ENCODE measurements at regions of chr18 and their contacts with region 1.

Region 1: DNA sequence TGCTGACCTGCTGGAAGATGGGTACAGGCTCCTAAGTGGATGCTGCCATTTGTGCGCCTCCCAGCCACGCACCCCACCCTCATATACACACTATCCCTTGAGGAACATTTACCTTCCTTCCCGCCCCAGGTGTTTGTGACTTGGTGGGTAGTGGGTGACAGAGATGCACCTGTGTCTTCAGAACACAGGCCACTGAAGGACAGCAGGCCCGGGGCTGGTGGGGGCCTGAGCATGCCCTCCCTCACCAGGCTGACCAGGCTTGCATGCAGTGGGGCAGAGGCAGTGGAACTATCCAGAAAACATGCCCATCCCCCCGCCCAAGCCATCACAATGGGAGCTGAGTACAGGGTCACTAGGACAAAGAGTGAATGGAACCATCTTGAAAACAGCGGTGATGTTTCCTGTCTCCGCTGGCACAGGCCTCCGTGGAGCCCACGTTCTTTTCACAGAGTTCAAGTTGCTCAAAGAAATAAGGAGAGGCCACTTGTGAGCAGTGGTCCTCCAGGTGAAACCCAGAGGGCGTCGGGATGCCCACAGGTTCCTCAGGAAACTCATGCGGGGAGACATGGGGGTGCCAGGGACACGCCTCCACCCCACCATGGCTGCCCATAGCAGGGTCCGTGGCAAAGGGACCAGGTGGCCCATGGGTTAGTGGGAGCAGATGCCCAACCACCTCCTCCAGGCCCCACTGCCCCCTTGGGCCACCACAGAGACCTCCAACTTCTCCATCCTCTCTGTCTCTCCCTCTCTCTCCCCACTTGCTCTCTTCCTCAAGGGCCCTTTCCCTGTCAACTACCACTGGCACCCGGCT is 90.9 kb downstream of the MALT1 start:
- DNase-seq: peak in 1 of 2 experiments; percentile 46
- H3K4me3 ChIP-seq: no peak overlapping the region
- H3K27ac ChIP-seq: no peak overlapping the region
- H3K4me1 ChIP-seq: peaks cover 0 to 7% (median 0%) of the 10 kb centered on the region in 4 experiments; a peak in 3 of 7 replicates
- H3K27me3 ChIP-seq: no peaks in the 10 kb centered on the region
- CTCF ChIP-seq: no peak
- EP300 ChIP-seq: no peak
- POLR2A ChIP-seq: no peak
- RAD21 ChIP-seq: no peak

Region 2: GRCh38 chr18:58520969-58521368 is 241.2 kb before region 1 on chr18:
- CTCF ChIA-PET with region 1: interaction called, 493 read pairs
- POLR2A ChIA-PET with region 1: no interaction called
- DNase-seq: no peak
- H3K4me3 ChIP-seq: no peak overlapping the region
- H3K27ac ChIP-seq: no peak overlapping the region
- H3K4me1 ChIP-seq: no peaks in the 10 kb centered on the region
- H3K27me3 ChIP-seq: no peaks in the 10 kb centered on the region
- CTCF ChIP-seq: no peak
- EP300 ChIP-seq: no peak
- POLR2A ChIP-seq: no peak
- RAD21 ChIP-seq: no peak

Region 3: DNA sequence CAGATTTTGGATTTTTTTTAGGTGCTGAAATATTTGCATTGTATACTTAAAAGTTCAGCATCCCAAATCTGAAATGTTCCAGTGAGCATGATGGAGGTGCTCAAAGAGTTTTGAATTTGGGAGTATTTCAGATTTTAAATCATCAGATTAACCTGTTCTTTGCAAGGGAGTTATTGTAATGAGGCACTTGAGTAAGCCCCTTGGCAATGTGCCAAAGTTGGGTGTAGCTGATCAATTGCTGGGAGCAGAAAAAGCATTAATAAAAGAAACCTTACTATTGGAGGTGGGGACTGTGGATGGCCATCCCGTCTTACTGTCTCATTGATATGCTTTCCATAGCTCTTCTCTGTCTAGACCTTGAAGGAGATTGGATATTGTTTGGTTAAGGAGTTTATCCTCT is 62.6 kb before region 1 on chr18:
- CTCF ChIA-PET with region 1: interaction called, 21 read pairs
- POLR2A ChIA-PET with region 1: no interaction called
- DNase-seq: no peak
- H3K4me3 ChIP-seq: no peak overlapping the region
- H3K27ac ChIP-seq: no peak overlapping the region
- H3K4me1 ChIP-seq: peaks cover 0 to 3% (median 0%) of the 10 kb centered on the region in 4 experiments; a peak in 1 of 7 replicates
- H3K27me3 ChIP-seq: no peaks in the 10 kb centered on the region
- CTCF ChIP-seq: no peak
- EP300 ChIP-seq: no peak
- POLR2A ChIP-seq: no peak
- RAD21 ChIP-seq: no peak

Region 4: DNA sequence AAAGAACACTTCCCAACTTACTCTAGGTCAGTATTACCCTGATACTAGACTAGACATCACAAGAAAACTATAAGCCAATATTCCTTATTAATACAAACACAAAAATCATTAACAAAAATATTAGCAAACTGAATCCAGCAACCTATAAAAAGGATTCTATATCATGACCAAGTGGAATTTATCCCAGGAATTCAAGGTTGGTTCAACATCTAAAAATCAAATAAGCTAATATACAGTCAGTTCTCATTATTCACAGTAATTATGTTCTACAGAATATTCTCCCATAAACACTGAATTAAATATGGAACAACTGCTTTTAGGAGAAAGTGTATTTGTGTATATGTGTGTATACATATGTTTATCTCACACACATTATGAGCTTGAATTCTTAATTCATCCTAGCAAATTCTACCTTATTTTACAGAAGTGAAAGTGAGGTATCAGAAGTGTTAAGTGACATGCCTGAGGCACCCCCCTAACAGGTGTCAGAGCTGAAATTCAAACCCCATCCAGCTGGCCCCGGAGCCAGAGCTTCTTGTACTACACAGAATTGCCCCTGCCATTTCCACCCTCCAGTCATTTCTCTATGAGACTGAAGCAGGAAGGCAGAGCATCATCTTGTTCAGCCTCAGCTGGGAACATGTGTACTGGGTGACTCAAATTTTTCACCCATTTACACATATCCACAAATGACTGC is 13.1 kb before region 1 on chr18:
- CTCF ChIA-PET with region 1: interaction called, 32 read pairs
- POLR2A ChIA-PET with region 1: no interaction called
- DNase-seq: no peak
- H3K4me3 ChIP-seq: no peak overlapping the region
- H3K27ac ChIP-seq: no peak overlapping the region
- H3K4me1 ChIP-seq: no peaks in the 10 kb centered on the region
- H3K27me3 ChIP-seq: no peaks in the 10 kb centered on the region
- CTCF ChIP-seq: no peak
- EP300 ChIP-seq: no peak
- POLR2A ChIP-seq: no peak
- RAD21 ChIP-seq: no peak

Region 5: DNA sequence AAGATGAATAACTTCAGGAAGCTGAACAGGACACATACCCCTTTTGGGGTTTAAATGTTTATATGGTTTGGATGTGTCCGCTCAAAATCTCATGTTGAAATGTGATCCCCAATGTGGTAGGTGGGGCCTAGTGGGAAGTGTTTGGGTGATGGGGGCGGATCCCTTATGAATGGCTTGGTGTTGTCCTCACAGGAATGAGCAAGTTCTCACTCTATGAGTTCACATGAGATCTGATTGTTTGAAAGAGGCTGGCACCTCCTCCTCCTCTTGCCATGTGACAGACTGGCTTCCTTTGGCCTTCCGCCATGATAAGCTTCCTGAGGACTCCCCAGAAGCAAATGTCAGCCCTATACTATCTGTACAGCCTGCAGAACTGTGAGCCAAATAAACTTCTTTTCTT is 13.9 kb after region 1 on chr18:
- CTCF ChIA-PET with region 1: interaction called, 42 read pairs
- POLR2A ChIA-PET with region 1: interaction called, 5 read pairs
- DNase-seq: no peak
- H3K4me3 ChIP-seq: no peak overlapping the region
- H3K27ac ChIP-seq: no peak overlapping the region
- H3K4me1 ChIP-seq: no peaks in the 10 kb centered on the region
- H3K27me3 ChIP-seq: no peaks in the 10 kb centered on the region
- CTCF ChIP-seq: no peak
- EP300 ChIP-seq: no peak
- POLR2A ChIP-seq: no peak
- RAD21 ChIP-seq: no peak

Region 6: GRCh38 chr18:58870621-58871020 is 108.4 kb after region 1 on chr18:
- CTCF ChIA-PET with region 1: no interaction called
- POLR2A ChIA-PET with region 1: no interaction called
- DNase-seq: no peak
- H3K4me3 ChIP-seq: no peak overlapping the region
- H3K27ac ChIP-seq: no peak overlapping the region
- H3K4me1 ChIP-seq: peaks cover 15 to 32% (median 25%) of the 10 kb centered on the region in 4 experiments
- H3K27me3 ChIP-seq: no peaks in the 10 kb centered on the region
- CTCF ChIP-seq: no peak
- EP300 ChIP-seq: no peak
- POLR2A ChIP-seq: no peak; a peak in 1 of 3 replicates
- RAD21 ChIP-seq: no peak

Region 7: GRCh38 chr18:59075923-59076322 is 313.7 kb after region 1 on chr18:
- CTCF ChIA-PET with region 1: interaction called, 591 read pairs
- POLR2A ChIA-PET with region 1: interaction called, 3 read pairs
- DNase-seq: no peak
- H3K4me3 ChIP-seq: no peak overlapping the region
- H3K27ac ChIP-seq: no peak overlapping the region
- H3K4me1 ChIP-seq: no peaks in the 10 kb centered on the region
- H3K27me3 ChIP-seq: peaks cover 0 to 4% (median 0%) of the 10 kb centered on the region in 4 experiments; a peak in 1 of 7 replicates
- CTCF ChIP-seq: no peak
- EP300 ChIP-seq: no peak
- POLR2A ChIP-seq: no peak
- RAD21 ChIP-seq: no peak